Psoas muscle (tissue), 8 donors: ENCODE measurements at regions of chr19 and their contacts with region 1.

Region 1: DNA sequence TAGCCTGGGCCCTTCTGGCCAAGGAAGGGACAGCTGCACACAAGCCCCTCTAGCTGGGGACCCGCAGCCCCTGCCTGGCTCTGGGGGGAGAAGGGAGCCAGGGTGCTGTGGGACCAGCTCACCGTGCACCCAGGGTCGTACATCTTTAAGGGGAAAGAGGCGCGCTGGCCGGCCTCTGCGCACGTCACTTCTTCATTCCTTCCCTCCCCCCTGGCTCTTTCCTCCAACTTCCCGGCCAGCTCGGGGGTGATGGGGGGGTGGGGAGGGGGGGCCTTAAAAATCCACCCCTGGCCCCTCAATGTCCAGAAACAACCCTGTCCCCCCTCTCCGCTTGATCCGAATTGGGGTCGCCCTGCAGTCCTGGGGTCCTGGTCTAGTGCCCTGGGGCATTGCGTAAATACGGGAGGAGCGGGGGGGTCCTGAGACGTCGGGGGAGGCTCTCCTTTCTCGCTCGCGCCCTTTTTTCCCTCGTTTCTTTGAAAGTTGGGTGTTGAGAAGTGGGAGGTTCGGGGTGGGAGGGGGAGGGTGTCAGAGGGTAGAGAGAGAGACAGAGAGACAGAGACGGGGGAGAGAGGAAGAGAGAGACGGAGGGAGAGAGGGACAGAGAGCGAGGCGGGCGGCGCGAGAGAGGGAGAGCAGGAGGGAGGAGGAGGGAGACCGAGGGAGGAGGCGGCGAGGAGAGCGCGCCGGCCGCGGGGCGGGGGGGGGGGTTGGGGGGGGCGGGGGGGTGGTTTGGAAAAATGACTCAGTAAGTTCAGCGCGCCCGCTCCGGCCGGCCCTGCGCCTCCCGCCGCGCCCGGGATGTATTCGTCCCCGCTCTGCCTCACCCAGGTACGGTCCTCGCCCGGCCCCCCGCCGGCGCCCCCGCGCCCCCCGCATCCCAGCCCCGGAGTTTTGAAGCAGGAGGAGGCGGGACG is at the start of gene NFIC:
- DNase-seq: peak; percentile 84 to 94
- ATAC-seq: peak; percentile 55 to 59 (median 59)
- H3K4me3 ChIP-seq: peak within 1 kb of the TSS; percentile 85
- H3K27ac ChIP-seq: peak within 1 kb of the TSS; percentile 97
- H3K4me1 ChIP-seq: peaks cover 52% of the 10 kb centered on the region
- H3K27me3 ChIP-seq: no peaks in the 10 kb centered on the region
- CTCF ChIP-seq: no peak
- total RNA-seq, gene NFIC: 209 to 439 (median 325) TPM

Region 2: GRCh38 chr19:3403489-3404323 is 37.6 kb after region 1 on chr19:
- intact Hi-C with region 1: loop called (anchors 2 to 5 kb)
- DNase-seq: peak; percentile 93 to 95
- ATAC-seq: peak; percentile 63 to 73 (median 72)
- H3K4me3 ChIP-seq: peak overlapping the region; percentile 68
- H3K27ac ChIP-seq: peak overlapping the region; percentile 100
- H3K4me1 ChIP-seq: peaks cover 68% of the 10 kb centered on the region
- H3K27me3 ChIP-seq: no peaks in the 10 kb centered on the region
- CTCF ChIP-seq: no peak